ENCODE measurements at regions of chr1 and their contacts with region 1.

Region 1: DNA sequence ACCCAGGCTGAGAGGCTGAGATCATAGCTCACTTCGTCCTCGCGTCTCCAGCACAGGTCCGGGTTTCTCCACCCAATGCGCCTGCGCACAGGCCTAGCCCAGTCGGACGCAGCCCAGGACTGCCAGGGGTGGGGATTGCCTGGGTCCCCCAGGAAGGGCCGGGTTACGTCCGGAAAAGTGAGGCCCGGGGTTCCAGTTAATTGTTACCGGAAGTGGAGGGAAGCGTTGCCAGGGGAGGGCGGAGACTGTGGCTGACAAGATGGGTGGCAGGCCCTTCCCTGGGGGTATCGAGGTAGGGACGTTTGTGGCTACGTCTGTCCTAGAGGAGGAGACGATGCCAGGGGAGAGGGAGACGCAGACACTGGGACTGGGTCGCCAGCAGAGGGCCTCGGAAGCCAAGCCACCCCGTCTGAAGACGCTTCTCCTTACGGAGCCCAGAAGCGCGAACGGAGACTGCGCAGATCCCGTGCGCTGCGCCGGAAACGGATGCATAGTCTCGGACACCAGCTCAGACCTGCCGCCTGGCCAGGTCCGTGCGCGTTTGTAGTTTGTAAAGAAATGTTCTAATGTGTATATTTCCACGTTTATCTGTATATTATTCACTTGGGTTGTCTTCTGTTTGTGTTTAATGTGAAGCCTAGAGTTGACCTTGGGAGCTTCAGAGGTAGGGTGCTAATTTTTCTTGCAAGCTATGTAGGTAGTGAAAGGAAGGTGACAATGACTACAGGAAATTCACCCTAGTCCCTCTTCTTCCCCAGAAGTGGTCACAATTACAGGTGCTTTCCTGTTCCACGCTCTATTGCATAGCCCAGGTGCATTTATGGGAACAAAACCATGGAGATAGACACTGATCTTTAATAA is 7.3 kb downstream of the RSRP1 start:
- DNase-seq: peak; percentile 96
- ATAC-seq: peak; percentile 96

Region 2: DNA sequence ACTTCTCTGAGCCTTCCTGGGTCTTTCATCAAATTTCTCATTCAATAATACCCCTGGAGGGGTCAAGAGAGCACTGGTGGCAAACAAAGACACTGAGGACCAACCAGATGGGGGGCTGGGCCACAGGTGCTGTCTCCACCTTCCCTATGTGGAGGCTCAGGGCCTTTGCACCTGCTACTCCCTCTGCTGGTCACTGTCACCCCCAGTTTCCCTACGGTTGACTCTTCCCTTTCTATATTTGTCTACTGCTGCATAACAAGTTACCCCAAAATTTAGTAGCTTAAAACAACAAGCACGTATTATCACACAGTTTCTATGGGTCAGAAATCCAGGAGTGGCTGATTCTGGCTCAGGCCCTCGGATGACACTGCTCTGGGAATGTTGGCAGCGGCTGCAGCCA is 171.1 kb before region 1 on chr1:
- intact Hi-C with region 1: no loop called
- DNase-seq: no peak
- ATAC-seq: no peak

Region 3: GRCh38 chr1:25223471-25223870 is 16.4 kb before region 1 on chr1:
- intact Hi-C with region 1: no loop called
- DNase-seq: no peak
- ATAC-seq: no peak

Region 4: DNA sequence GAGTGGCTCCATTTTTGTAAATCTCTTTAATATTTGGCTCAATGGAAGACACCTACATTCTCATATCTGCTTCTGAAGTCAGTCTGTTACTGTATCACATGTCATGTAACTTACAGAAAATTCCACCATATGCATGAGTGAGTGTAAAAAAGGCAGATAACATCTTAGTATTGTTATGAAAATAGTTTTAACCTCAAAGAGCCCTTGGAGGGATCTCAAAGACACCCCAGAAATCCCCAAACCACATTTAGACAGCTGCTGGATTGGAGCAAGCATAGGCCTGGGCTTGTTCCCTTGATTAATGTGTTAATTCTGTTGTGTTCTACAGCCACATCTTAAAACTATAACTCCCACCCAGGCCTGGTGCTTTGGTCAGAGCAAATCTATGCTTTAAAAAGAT is 207.6 kb after region 1 on chr1:
- intact Hi-C with region 1: no loop called
- DNase-seq: no peak
- ATAC-seq: no peak

Region 5: DNA sequence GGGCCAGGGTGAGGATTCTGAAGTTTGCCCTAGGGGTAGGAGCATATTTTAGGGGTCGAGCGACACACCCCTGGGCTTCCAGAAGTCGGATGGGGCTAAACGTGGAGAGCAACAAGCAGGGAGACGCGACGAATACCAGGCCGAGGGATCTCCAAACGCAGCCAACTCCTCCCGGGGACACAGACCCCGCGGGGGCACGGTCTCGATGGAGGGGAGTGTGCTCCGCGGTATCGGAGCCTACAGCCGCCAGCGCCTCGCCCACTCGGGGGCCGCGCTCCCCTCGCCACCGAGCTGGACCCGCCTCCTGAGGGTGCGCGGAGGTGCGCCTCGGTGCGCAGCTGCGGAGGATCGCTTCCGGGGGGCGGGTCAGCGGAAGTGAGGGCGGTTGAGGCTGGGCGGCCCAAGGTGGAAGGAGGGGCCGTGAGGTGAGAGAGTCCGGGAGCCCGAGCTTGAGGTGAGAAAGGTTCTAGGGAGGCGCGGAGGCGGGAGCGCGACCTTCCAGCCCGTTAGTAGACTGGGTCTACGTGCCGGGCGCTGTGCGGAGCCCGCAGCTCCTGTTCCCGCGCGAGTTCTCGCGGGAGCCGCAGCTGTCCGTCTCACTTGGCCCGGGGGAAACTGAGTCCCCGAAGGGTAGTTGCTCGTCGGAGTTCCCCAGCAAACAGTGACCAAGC is 579.8 kb after region 1 on chr1 and contains the start of gene MTFR1L:
- intact Hi-C with region 1: loop called (anchors 10 kb)
- DNase-seq: peak; percentile 95
- ATAC-seq: peak; percentile 92
- total RNA-seq, gene MTFR1L: 206 TPM